ENCODE measurements at regions of chr6 and their contacts with region 1.

Region 1: DNA sequence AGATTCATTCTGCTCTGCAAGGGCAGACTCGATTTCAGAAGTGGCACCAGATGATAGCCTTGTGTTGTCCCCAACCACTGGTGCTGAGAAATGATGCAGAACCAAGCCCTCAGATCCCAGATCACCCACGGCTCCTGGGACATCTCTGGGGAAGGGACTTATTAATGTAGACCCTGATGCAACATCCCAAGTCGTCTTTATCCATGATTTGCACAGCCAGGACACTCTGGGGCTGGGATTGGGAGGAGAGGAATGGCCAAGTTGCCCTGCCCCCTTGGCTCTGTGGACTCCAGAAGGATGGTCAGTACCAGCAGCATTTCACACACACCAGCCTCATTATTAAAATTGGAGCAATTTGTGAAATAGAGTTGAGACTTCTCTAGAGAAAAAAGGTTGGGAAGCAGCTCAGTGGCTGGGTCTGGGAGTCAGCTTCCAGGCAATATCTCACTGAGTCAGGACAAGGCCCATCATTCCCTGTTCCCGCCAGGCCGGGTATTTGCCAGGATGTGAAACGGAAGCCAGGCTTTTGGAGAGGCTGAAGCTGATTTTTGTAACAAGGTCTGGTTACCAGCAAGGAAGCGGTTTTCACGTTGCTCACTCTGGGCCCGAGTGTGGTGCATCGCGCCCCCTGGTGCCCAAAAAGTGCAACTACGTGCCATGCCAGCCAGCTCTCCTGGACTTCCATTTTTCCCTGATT is 67.4 kb downstream of the ZBTB2 start:
- DNase-seq: no peak
- H3K4me3 ChIP-seq: no peak overlapping the region
- H3K27me3 ChIP-seq: no peaks in the 10 kb centered on the region
- CTCF ChIP-seq: peak; percentile 95

Region 2: DNA sequence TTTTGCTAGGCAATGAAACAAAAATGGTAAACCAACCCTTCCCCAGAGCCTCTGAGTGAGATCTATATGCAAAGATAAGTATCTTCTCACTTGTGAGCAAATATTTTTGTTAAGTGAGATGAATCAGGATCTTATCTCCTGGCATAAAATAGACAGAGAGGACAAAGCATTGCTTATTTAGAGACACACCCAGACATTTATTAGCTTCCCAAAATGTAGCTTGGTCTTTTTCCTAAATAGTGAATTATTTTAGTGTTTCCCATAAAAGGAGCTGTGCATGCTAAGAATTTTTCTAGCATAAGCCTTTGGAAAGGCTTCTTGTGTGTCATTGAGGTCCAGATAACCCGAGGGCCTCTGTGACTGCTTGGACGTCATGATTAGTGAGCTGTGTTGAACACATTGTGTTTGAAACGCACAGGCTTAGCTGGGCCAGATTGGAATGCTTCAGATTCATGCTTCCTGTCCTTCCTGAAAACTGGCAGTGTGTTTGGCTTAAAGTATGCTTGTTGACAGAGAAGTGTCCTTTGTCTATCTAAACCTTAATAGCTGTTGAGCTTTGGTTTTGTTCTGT is 441.9 kb before region 1 on chr6:
- CTCF ChIA-PET with region 1: interaction called, 5 read pairs
- POLR2A ChIA-PET with region 1: interaction called, 10 read pairs
- DNase-seq: peak; percentile 98
- H3K4me3 ChIP-seq: no peak overlapping the region
- H3K27me3 ChIP-seq: no peaks in the 10 kb centered on the region
- CTCF ChIP-seq: no peak

Region 3: DNA sequence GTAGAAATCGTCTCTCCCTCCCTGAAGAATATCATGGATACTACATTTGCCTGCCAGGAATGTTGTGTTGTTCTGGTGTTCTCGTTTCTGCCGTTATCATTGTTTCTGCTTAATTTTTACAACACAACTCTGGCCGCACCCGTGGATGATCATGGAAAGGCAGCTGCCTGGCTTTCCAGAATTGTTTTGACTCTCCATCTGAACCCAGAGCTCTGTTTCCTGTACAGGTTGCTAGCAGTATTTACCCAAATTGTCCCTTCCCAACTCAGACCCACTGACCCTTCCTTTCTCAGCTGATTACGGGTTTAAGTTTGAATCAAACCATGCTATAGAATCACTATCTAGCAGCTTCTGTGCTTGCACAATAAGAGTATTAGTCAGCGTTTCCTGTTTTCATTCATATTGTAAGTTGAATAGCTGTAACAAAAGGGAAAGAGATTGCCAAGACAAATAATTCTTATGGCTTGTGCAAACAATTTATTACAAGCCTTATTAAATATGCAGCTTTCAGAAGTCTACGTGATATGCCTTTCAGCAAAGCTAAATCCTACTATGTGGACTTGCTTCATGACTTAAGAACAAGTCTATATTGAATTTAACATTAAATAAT is 319.4 kb before region 1 on chr6:
- CTCF ChIA-PET with region 1: interaction called, 166 read pairs
- POLR2A ChIA-PET with region 1: no interaction called
- DNase-seq: peak; percentile 75
- H3K4me3 ChIP-seq: no peak overlapping the region
- H3K27me3 ChIP-seq: no peaks in the 10 kb centered on the region
- CTCF ChIP-seq: no peak

Region 4: DNA sequence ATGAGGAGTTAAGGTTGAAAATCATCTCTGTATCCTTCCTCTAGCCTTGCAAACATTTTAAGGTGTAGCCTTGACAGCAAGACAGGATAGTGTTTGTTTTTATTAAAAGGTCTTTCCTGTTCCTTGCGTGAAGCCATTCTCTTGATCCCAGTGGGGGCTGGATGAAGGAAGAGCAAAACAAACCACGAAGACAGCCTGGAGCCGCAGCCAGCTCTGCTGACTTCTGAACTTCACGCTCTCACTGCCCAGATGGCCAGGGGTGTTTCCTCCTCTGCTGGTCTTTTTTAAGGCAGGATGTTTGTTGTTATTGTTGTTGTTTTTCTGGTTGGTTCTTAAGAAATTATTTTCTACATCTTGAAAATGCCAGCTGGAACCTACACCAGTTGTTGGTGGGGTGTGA is 302.0 kb before region 1 on chr6:
- CTCF ChIA-PET with region 1: interaction called, 166 read pairs
- POLR2A ChIA-PET with region 1: no interaction called
- DNase-seq: no peak
- H3K4me3 ChIP-seq: no peak overlapping the region
- H3K27me3 ChIP-seq: no peaks in the 10 kb centered on the region
- CTCF ChIP-seq: no peak

Region 5: GRCh38 chr6:151067684-151068596 is 256.0 kb before region 1 on chr6:
- CTCF ChIA-PET with region 1: interaction called, 14 read pairs
- POLR2A ChIA-PET with region 1: interaction called, 3 read pairs
- DNase-seq: peak; percentile 75
- H3K4me3 ChIP-seq: no peak overlapping the region
- H3K27me3 ChIP-seq: no peaks in the 10 kb centered on the region
- CTCF ChIP-seq: no peak

Region 6: DNA sequence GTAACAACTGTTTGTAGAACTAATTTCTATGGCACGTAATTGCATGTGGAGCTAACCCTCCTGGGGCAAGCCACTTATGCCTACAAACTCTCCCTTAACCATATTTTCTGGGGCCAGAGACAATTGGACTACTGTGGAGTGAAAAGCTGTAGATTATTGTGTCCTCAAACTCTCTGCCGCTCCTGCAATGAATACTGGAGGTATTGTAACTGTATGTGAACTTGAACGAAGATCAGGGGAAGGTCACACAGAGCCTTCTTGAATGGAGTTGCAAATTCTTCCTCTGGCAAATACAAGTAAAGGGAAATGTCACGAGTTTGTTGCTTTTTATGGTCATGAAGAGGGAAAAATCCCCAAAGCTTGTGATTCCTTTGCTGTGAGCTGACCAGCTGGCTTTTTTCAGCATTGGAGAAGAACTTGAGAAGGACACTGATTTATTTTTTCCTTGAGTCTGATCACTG is 65.9 kb before region 1 on chr6:
- CTCF ChIA-PET with region 1: interaction called, 11 read pairs
- POLR2A ChIA-PET with region 1: no interaction called
- DNase-seq: no peak
- H3K4me3 ChIP-seq: no peak overlapping the region
- H3K27me3 ChIP-seq: no peaks in the 10 kb centered on the region
- CTCF ChIP-seq: no peak

Region 7: DNA sequence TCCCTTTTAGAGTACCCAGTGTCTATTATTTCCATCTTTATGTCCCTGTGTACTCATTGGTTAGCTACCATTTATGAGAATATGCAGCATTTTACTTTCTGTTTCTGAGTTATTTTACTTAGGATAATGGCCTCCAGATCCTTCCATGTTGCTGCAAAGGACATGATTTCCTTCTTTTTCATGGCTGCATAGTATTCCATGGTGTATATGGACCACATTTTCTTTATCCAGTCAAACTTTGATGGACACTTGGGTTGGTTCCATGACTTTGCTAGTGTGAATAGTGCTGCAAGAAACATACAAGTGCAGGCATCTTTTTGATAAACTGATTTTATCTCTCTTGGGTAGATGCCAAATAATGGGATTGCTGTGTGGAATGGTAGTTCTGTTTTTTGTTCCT is 12.0 kb after region 1 on chr6:
- CTCF ChIA-PET with region 1: interaction called, 20 read pairs
- POLR2A ChIA-PET with region 1: interaction called, 4 read pairs
- DNase-seq: no peak
- H3K4me3 ChIP-seq: no peak overlapping the region
- H3K27me3 ChIP-seq: no peaks in the 10 kb centered on the region
- CTCF ChIP-seq: no peak